ENCODE measurements at regions of chr11 and their contacts with region 1.

Region 1: GRCh38 chr11:110447897-110448745 is 18.4 kb downstream of the FDX1 start:
- DNase-seq: no peak
- ATAC-seq: no peak
- H3K4me3 Mint-ChIP-seq: no peak overlapping the region
- H3K27ac Mint-ChIP-seq: no peak overlapping the region
- H3K4me1 Mint-ChIP-seq: peaks cover 32% of the 10 kb centered on the region
- H3K27me3 Mint-ChIP-seq: no peaks in the 10 kb centered on the region

Region 2: DNA sequence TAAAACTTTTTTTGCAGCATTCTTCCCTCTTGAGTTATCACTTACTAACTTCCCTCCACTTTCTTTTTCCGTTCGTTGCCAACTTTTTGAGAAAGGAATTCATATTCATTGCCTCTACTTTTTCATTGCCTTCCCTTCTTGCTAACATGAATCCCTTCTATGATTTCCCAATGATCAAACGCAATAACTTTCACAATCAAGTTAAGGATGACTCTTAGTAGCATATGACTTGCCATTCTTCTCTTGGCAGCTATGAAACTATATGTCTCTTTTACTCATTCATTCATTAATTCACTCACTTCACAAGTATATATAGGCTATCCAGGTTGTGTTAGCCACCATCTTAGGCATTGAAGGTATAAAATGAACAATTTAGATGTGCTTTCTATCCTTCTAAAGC is 280.8 kb after region 1 on chr11:
- CTCF ChIA-PET with region 1: no interaction called
- DNase-seq: no peak
- ATAC-seq: no peak
- H3K4me3 Mint-ChIP-seq: no peak overlapping the region
- H3K27ac Mint-ChIP-seq: no peak overlapping the region
- H3K4me1 Mint-ChIP-seq: no peaks in the 10 kb centered on the region
- H3K27me3 Mint-ChIP-seq: peaks cover 25% of the 10 kb centered on the region

Region 3: GRCh38 chr11:111230122-111230465 is 782.0 kb after region 1 on chr11:
- CTCF ChIA-PET with region 1: interaction called, 10 read pairs
- DNase-seq: no peak
- ATAC-seq: peak; percentile 59
- H3K4me3 Mint-ChIP-seq: peak overlapping the region; percentile 75
- H3K27ac Mint-ChIP-seq: no peak overlapping the region
- H3K4me1 Mint-ChIP-seq: peaks cover 29% of the 10 kb centered on the region
- H3K27me3 Mint-ChIP-seq: peaks cover 31% of the 10 kb centered on the region